ENCODE measurements at regions of chr19 and their contacts with region 1.

Region 1: GRCh38 chr19:58002384-58003173 is at the start of gene ZNF606:
- H3K4me3 ChIP-seq: peak within 1 kb of the TSS; percentile 99
- H3K27ac ChIP-seq: peak within 1 kb of the TSS; percentile 83
- H3K4me1 ChIP-seq: peaks cover 4% of the 10 kb centered on the region
- CTCF ChIP-seq: no peak

Region 2: GRCh38 chr19:57947208-57948134 is 55.1 kb before region 1 on chr19 and contains the start of gene ZNF256:
- CTCF ChIA-PET with region 1: no interaction called
- POLR2A ChIA-PET with region 1: interaction called, 10 read pairs
- H3K4me3 ChIP-seq: peak within 1 kb of the TSS; percentile 98
- H3K27ac ChIP-seq: peak within 1 kb of the TSS; percentile 78
- H3K4me1 ChIP-seq: peaks cover 5% of the 10 kb centered on the region; the same call in 1 of the 2 replicates
- CTCF ChIP-seq: peak; percentile 87

Region 3: GRCh38 chr19:58059003-58059670 is 56.6 kb after region 1 on chr19 and contains the start of gene ZNF135:
- CTCF ChIA-PET with region 1: no interaction called
- POLR2A ChIA-PET with region 1: interaction called, 12 read pairs
- H3K4me3 ChIP-seq: peak within 1 kb of the TSS; percentile 44
- H3K27ac ChIP-seq: no peak within 1 kb of the TSS; the same call in 1 of the 2 replicates
- H3K4me1 ChIP-seq: no peaks in the 10 kb centered on the region
- CTCF ChIP-seq: no peak

Measured in HEK293 (cell line).